ENCODE measurements at regions of chr7 and their contacts with region 1.

Region 1: DNA sequence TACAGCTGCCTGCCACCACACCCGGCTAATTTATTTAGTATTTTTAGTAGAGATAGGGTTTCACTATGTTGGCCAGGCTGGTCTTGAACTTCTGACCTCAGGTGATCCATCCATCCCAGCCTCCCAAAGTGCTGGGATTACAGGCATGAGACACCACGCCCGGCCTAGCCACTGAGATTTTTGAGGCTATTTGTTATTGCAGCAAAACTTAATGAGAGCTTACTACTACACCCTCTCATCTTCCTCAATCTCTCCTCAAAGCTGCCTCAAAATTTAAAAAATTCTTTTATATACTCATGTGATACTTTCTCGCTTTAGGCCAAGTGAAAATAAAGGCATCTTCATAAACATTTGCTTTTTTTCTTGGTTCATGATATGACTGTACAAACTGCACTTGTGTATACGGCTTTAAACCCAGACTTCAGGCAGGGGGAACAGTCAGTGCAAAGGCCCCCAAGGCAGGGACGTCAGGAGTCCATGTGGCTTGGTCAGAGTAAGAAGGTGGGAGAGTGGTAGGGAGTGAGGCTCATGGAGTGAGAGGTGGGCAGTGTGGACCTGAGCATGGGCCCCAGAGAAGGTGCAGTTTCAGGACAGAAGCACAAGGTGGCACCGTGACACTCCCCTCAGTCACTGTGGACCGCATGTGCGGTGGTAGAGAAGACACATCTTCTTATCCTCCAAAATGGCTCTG is 55.5 kb downstream of the SYPL1 start:
- DNase-seq: peak; percentile 65 to 76
- ATAC-seq: peak; percentile 84 to 96 (median 91)
- H3K4me3 ChIP-seq: no peak overlapping the region
- H3K27ac ChIP-seq: no peak overlapping the region
- H3K4me1 ChIP-seq: peaks cover 0 to 22% (median 8%) of the 10 kb centered on the region in 9 donors
- H3K27me3 ChIP-seq: no peaks in the 10 kb centered on the region
- CTCF ChIP-seq: peak; percentile 78 to 93 (median 86)

Region 2: GRCh38 chr7:105934572-105935185 is 122.0 kb before region 1 on chr7:
- intact Hi-C with region 1: no loop called
- DNase-seq: peak in 1 of 2 donors; percentile 16
- ATAC-seq: peak; percentile 74 to 92 (median 78)
- H3K4me3 ChIP-seq: no peak overlapping the region
- H3K27ac ChIP-seq: no peak overlapping the region
- H3K4me1 ChIP-seq: peaks cover 0 to 19% (median 2%) of the 10 kb centered on the region in 9 donors
- H3K27me3 ChIP-seq: no peaks in the 10 kb centered on the region
- CTCF ChIP-seq: peak in 7 of 9 donors; percentile 29 to 63 (median 43)

Region 3: DNA sequence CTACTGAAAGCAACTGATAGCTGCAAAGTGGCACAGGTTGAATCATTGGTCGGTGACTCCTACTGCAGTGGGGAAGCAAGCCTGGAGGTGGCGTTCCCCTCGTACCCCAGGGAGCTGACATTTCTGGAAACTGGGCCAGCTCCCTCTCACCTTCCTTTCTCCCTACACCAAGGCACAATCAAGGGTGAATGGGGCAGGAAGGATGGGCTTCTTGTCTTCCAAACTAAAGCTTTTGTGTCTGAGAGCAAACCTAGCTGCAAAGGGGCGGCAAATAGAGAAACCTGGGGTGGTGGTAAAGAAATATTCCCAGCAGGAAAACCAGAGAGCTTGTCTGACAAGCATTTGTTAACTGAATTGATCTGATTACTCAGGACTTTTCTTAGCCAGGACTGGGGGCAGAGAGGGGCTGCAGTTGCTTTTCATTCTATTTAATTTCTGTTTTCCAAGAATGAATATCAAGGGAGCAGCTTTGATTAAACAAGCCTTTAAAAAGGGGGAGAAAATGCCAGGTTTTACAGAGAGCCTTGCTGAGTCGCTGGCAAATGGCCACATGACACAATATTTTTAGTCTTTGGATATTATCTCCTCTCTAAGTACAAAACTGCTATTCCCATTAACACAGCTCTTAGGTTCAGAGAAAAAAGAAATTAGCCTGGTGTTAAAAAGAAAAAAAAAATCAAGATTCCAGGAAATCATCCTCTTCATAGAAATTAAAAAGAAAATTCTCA is 65.8 kb before region 1 on chr7:
- intact Hi-C with region 1: no loop called
- DNase-seq: peak in 1 of 2 donors; percentile 29
- ATAC-seq: peak in 1 of 8 donors; percentile 40
- H3K4me3 ChIP-seq: no peak overlapping the region
- H3K27ac ChIP-seq: no peak overlapping the region
- H3K4me1 ChIP-seq: peaks cover 0 to 12% (median 6%) of the 10 kb centered on the region in 9 donors
- H3K27me3 ChIP-seq: no peaks in the 10 kb centered on the region
- CTCF ChIP-seq: no peak

Region 4: GRCh38 chr7:106187613-106188350 is 131.1 kb after region 1 on chr7:
- intact Hi-C with region 1: no loop called
- DNase-seq: no peak
- ATAC-seq: no peak
- H3K4me3 ChIP-seq: no peak overlapping the region
- H3K27ac ChIP-seq: no peak overlapping the region
- H3K4me1 ChIP-seq: peaks cover 0 to 7% (median 0%) of the 10 kb centered on the region in 9 donors
- H3K27me3 ChIP-seq: no peaks in the 10 kb centered on the region
- CTCF ChIP-seq: no peak

Region 5: DNA sequence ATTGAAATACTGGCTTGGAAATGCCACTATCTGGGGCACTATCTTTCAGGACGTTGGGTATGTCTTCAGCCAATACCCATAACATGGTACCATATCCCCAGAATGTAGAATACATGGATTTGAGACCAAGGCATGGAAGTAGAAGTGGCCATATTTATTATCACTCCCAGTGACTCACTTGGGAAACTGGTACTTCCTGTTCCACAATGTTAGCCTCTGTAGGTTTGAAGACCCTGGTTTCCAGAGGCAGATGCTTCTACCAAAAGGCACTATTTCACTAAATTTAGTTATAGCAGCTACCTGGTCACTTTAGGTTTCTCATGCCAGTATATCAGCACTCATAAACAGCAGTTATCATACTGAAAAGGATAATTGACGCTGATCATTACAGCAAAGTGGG is 420.1 kb after region 1 on chr7:
- intact Hi-C with region 1: loop called in 1 of 10 experiments (anchors 10 kb)
- DNase-seq: no peak
- ATAC-seq: no peak
- H3K4me3 ChIP-seq: no peak overlapping the region
- H3K27ac ChIP-seq: no peak overlapping the region
- H3K4me1 ChIP-seq: no peaks in the 10 kb centered on the region
- H3K27me3 ChIP-seq: no peaks in the 10 kb centered on the region
- CTCF ChIP-seq: no peak

Measured in heart right ventricle (tissue), 16 donors.